Breast epithelium (tissue), 4 donors: ENCODE measurements at regions of chr1 and their contacts with region 1.

Region 1: GRCh38 chr1:156136970-156137483 is 16.4 kb upstream of the SEMA4A start:
- DNase-seq: no peak
- H3K4me3 ChIP-seq: no peak overlapping the region
- H3K27ac ChIP-seq: peak overlapping the region; percentile 6 to 52
- H3K4me1 ChIP-seq: peaks cover 0 to 10% of the 10 kb centered on the region in 2 donors
- H3K27me3 ChIP-seq: no peaks in the 10 kb centered on the region
- CTCF ChIP-seq: no peak
- POLR2A ChIP-seq: no peak

Region 2: GRCh38 chr1:154431586-154432373 is 1705.2 kb before region 1 on chr1:
- intact Hi-C with region 1: loop called (anchors 5 kb)
- DNase-seq: no peak
- H3K4me3 ChIP-seq: no peak overlapping the region
- H3K27ac ChIP-seq: no peak overlapping the region
- H3K4me1 ChIP-seq: peaks cover 0 to 5% of the 10 kb centered on the region in 2 donors
- H3K27me3 ChIP-seq: no peaks in the 10 kb centered on the region
- CTCF ChIP-seq: no peak
- POLR2A ChIP-seq: no peak

Region 3: DNA sequence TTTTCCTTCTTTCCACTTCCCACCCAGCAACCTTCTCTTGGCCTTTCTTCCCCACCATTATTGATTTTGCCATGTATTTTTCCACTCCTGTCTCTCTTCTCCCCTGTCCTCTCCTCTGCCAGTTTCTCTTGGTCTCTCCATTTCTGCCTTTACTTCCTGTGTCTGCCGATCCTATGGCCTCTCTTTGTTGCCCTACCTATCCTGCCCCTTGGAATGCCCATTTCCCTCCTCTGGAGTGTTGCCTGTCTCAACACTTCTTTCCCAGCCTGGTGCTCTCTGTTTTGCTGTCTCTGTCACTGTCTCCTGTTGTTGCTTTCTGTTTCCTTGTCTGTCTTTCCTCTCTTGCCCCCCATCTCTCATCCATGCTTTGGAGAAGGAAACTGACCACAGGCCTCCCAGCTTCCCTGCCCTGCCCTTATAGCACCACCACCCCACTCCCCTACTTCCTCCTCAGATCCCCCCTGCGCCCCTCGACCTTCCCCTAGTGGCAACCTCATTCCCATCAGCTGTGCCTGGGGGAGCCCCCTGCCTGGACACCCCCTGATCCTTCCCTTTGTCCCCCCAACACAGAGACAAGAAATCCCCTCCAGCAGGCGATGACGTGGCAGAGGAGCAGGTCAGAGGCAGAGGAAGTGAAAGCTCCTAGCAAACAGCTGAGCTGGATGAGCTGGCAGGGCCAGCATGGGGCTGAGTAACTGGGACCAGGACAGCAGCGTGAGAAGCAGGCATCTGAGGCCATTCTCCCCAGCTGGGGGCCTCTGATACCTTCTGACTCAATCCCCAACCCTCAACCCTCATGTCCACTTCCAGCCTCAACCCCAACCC is 969.2 kb after region 1 on chr1:
- intact Hi-C with region 1: no loop called
- DNase-seq: no peak
- H3K4me3 ChIP-seq: no peak overlapping the region
- H3K27ac ChIP-seq: no peak overlapping the region
- H3K4me1 ChIP-seq: no peaks in the 10 kb centered on the region
- H3K27me3 ChIP-seq: no peaks in the 10 kb centered on the region
- CTCF ChIP-seq: no peak
- POLR2A ChIP-seq: no peak